ENCODE measurements at regions of chr2 and their contacts with region 1.

Region 1: DNA sequence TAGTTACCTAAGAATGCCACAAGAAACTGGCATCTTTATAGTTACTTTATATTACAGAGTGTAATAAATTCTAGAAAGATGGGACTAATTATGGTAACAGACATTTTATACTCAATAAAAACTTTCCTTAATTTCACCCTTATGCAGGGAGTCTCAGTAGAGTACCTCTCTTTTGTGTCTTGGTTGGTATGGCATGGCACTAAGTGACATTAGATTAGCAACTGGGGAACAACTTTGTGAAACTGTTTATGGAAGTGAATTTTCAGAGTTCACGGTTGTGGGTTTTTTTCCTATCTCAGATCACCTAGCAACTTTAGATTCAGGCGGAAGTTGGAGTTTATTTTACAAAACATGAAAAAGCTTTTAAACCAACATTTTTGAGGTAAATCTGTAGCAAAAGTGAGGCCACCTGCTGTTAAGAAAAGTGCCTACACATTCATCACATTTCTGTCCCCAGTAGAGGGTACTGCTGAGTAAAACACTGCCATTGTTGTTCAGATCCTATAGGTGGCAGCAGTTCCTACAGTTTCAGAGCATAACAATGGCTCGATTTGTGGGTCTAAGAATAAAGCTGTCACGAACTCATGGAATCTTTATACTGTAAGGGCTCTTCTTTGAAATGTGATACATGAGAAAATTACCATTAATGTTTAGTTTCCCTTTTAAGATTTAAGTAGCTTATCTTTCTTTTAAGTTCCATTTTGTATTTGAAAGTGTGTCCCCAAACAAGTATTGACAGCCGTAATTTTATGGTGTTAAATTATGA is 117.6 kb downstream of the CAMKMT start:
- DNase-seq: peak; percentile 74 to 91
- ATAC-seq: peak; percentile 99 to 100
- H3K4me3 ChIP-seq: no peak overlapping the region
- H3K27ac ChIP-seq: no peak overlapping the region
- H3K4me1 ChIP-seq: no peaks in the 10 kb centered on the region
- CTCF ChIP-seq: peak; percentile 100
- EP300 ChIP-seq: no peak
- POLR2A ChIP-seq: no peak
- RAD21 ChIP-seq: peak; percentile 98

Region 2: DNA sequence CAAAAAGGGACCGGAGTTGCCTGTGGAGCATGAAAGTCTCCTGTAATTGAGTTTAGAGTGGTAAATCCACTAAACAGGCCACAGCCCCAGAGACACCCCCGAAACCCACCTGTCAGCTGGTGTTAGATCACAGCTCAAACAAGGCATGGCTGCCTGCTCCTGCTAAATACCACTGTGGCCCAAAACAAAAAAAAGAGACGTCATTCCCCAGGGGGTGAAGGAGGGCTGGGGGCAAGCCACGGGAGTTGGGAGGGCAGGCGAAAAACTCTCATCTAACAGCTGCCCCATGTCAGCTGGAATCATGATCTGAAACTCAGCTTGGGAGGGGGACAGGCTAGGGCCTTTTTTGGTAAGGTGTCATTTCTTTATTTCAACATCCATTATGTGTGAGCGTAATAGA is 441.0 kb before region 1 on chr2:
- CTCF ChIA-PET with region 1: interaction called, 33 read pairs
- POLR2A ChIA-PET with region 1: no interaction called
- DNase-seq: no peak
- ATAC-seq: no peak
- H3K4me3 ChIP-seq: no peak overlapping the region
- H3K27ac ChIP-seq: no peak overlapping the region
- H3K4me1 ChIP-seq: no peaks in the 10 kb centered on the region
- CTCF ChIP-seq: no peak
- EP300 ChIP-seq: no peak
- POLR2A ChIP-seq: no peak
- RAD21 ChIP-seq: no peak

Region 3: DNA sequence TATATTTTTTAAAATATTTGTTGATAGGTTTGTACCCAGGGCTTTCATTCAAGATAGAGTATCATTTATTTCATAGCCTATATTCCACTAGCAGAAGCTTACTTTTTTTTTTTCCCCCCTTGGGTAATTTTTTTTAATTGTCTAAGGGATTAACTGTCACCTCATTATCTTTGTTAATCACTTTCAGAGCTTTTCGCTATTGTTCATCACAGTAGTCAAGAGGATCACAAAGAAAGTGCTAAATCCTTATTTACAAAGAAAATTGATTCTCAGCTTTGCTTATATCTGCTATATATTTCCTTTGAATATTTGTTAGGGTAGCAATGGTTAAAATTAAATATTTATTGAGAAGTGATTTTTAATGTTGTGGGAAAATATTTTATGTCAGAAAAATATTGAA is 58.6 kb before region 1 on chr2:
- CTCF ChIA-PET with region 1: interaction called, 11 read pairs
- POLR2A ChIA-PET with region 1: no interaction called
- DNase-seq: no peak
- ATAC-seq: no peak
- H3K4me3 ChIP-seq: no peak overlapping the region
- H3K27ac ChIP-seq: no peak overlapping the region
- H3K4me1 ChIP-seq: no peaks in the 10 kb centered on the region
- CTCF ChIP-seq: no peak
- EP300 ChIP-seq: no peak
- POLR2A ChIP-seq: no peak
- RAD21 ChIP-seq: no peak

Region 4: GRCh38 chr2:44462934-44463849 is 16.1 kb before region 1 on chr2:
- CTCF ChIA-PET with region 1: interaction called, 52 read pairs
- POLR2A ChIA-PET with region 1: no interaction called
- DNase-seq: no peak
- ATAC-seq: no peak
- H3K4me3 ChIP-seq: no peak overlapping the region
- H3K27ac ChIP-seq: no peak overlapping the region
- H3K4me1 ChIP-seq: no peaks in the 10 kb centered on the region
- CTCF ChIP-seq: no peak
- EP300 ChIP-seq: no peak
- POLR2A ChIP-seq: no peak
- RAD21 ChIP-seq: no peak

Region 5: GRCh38 chr2:44566059-44566458 is 86.8 kb after region 1 on chr2:
- CTCF ChIA-PET with region 1: interaction called, 17 read pairs
- POLR2A ChIA-PET with region 1: no interaction called
- DNase-seq: no peak
- ATAC-seq: no peak
- H3K4me3 ChIP-seq: no peak overlapping the region
- H3K27ac ChIP-seq: no peak overlapping the region
- H3K4me1 ChIP-seq: no peaks in the 10 kb centered on the region
- CTCF ChIP-seq: no peak
- EP300 ChIP-seq: no peak
- POLR2A ChIP-seq: no peak
- RAD21 ChIP-seq: no peak

Region 6: GRCh38 chr2:44955593-44956392 is 476.5 kb after region 1 on chr2:
- CTCF ChIA-PET with region 1: interaction called, 146 read pairs
- POLR2A ChIA-PET with region 1: interaction called, 5 read pairs
- DNase-seq: peak; percentile 79
- ATAC-seq: peak; percentile 75 to 87
- H3K4me3 ChIP-seq: peak overlapping the region; percentile 36
- H3K27ac ChIP-seq: peak overlapping the region; percentile 64 to 71; a peak in 4 of 6 replicates
- H3K4me1 ChIP-seq: peaks cover 25% of the 10 kb centered on the region
- CTCF ChIP-seq: peak; percentile 98
- EP300 ChIP-seq: no peak
- POLR2A ChIP-seq: no peak
- RAD21 ChIP-seq: peak; percentile 98 to 99

Region 7: DNA sequence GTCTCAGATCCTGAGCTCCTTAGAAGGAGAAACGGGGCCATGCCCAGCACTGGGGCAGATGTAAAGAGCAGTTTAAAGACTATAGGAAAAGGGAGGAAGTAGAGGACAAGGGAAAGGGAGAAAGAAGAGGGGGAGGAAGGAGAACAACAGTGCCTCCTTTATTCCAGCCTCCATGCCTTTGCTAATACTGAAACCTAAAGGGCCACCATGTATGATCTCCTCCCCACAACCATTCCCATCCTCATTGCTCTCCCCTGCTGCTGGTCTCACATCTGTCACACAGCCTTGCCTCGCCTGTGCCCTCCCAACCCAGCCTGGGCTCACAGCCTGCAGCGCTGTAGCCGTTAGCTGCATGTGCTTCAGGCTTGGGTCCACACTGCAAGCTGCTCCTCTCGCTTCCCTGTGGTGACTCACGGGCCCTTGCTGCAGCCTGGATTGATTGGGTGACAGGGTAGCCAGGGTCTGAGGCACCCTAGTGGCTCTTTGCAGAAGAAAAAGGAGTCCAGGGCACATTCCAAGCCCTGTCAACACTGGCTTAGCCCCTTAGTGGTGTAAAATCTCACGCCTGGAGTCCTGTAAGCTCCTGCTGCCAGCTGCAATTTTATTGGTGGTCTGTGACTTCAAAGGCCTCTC is 849.9 kb after region 1 on chr2:
- CTCF ChIA-PET with region 1: no interaction called
- POLR2A ChIA-PET with region 1: no interaction called
- DNase-seq: peak; percentile 23 to 35
- ATAC-seq: peak; percentile 62 to 78; a peak in 5 of 6 replicates
- H3K4me3 ChIP-seq: no peak overlapping the region
- H3K27ac ChIP-seq: no peak overlapping the region
- H3K4me1 ChIP-seq: peaks cover 9% of the 10 kb centered on the region
- CTCF ChIP-seq: no peak
- EP300 ChIP-seq: no peak
- POLR2A ChIP-seq: no peak
- RAD21 ChIP-seq: peak in 1 of 2 experiments; percentile 19; a peak in 1 of 5 replicates

Measured in A549 (cell line).